ENCODE measurements at regions of chr16 and their contacts with region 1.

Region 1: DNA sequence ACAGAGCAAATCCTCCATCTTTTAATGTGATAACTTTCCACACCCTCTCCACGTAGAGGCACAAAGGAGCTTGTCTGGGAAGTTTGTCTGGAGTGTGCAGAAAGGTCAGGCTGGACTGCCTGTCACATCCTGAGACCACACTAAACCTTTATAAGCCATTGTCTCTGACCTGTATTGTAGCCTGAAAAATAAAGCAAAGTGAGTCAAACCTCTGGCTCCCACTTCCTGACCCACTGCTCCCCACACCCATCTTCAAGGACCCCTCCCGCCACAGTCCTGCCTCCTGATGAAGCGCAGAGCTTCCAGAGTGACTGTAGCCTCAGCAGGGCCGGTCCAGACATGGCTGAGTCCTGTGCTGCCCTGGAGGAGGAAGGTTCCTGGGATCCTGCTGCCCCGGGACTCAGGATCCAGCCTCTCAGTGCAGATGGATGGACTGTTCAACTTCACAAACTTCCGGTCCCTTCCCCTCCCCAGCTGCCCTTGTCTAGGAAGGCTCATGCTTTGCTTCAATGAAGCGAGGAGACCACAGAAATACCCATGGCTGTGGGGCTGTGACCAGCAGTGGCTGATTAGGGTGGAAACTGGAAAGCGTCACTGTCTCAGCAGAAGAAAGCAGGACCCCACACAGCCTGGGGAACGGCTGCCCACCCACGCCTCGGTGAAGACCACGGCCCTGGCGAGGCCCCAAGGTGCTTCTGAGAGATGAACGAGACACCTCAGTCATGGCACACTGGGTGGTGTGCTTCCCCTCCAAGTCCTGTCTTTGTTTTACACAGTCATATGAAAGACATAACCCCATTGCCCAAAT is 30.9 kb upstream of the CLEC18B start:
- DNase-seq: peak; percentile 71
- CTCF ChIP-seq: no peak

Region 2: GRCh38 chr16:74309789-74310781 is 142.1 kb before region 1 on chr16:
- in situ Hi-C with region 1: no loop called
- DNase-seq: peak; percentile 67
- CTCF ChIP-seq: peak; percentile 56

Region 3: GRCh38 chr16:74606521-74607310 is 154.6 kb after region 1 on chr16 and contains the start of gene GLG1:
- in situ Hi-C with region 1: loop called (anchors 25 kb)
- DNase-seq: peak; percentile 93
- CTCF ChIP-seq: no peak

Measured in GM13976 (cell line).